Panc1 (cell line): ENCODE measurements at regions of chr1 and their contacts with region 1.

Region 1: DNA sequence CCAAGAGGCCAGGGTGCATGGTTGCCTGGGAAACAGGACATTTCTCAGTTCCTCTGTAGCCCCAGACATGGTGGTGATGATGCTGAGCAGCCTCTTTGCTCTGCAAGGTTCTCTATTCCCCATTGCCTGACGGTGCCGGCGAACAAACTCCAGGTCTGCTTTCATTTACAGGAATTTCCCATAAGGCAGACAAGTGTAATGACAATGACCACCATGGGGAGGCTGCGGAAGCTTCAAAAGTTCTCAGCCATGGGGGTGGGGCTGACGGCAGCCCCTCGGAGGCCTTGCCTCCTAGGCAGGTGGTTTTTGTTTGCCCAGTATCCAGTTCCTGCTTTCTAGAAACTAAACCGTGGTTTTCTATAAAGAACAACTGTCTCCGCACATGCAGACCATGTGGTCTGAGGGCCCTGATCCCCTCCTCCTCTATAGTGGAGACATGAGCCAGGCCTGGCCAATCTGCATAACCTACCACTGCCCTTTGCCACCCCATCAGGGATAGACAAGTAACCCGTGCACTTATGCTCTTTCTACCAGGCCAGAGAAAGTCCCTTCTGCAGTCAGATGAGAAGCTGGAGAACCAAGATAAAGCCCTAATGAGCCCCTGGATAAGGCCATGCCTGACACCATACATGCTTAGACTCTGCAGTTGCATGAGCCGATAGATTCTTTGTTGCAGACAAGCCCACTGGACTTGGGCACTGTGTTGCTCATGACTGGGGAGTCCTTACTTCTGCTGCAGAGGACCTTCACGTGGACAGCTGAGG is 54.1 kb downstream of the LDLRAD2 start:
- DNase-seq: no peak
- ATAC-seq: no peak
- H3K4me3 ChIP-seq: no peak overlapping the region
- H3K27ac ChIP-seq: no peak overlapping the region
- H3K4me1 ChIP-seq: peaks cover 14% of the 10 kb centered on the region
- H3K27me3 ChIP-seq: no peaks in the 10 kb centered on the region
- CTCF ChIP-seq: no peak

Region 2: DNA sequence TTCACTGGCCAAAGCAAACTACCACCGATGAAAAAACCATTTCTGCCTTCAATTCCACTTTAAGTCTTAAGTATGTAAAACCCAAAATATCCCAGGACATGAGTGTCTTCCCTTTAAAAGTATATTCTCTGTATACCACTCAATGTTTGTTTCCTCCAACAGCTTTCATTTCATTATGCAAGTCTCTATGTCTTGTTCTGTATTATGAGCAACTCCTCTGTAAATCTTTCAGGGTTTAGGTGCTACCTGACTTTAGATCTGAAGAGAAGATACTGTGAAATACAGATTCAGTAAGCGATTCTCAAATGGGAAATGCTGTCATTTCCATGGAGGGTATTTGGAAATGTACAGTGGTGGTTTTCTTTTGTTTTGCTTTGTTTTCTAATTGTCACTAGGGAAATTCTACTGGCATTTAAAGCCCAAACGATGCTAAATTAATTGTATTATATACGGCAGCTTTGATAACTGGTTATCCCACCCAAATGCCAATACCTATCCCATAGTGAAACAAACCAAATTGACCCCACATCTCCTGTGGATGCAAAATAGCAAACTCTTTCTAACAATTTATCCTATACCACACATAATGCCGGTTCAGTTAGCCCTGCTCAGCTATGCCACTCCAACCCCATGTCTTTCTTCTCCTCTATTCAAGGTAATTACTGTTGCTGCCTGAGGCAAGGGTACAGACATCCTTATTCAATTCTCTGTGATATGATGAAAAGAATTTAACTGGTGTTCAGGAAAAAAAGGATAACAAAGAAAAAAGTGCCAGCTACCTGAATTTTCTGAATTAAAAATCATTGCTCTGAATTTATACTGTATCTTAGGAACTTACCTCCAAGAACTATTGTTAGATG is 872.2 kb before region 1 on chr1:
- CTCF ChIA-PET with region 1: no interaction called
- POLR2A ChIA-PET with region 1: interaction called, 13 read pairs
- in situ Hi-C with region 1: no loop called
- intact Hi-C with region 1: no loop called
- DNase-seq: no peak
- ATAC-seq: no peak
- H3K4me3 ChIP-seq: no peak overlapping the region
- H3K27ac ChIP-seq: no peak overlapping the region
- H3K4me1 ChIP-seq: peaks cover 12% of the 10 kb centered on the region; the same call in 1 of the 2 replicates
- H3K27me3 ChIP-seq: no peaks in the 10 kb centered on the region
- CTCF ChIP-seq: no peak

Region 3: GRCh38 chr1:21876267-21876666 is 10.1 kb after region 1 on chr1:
- CTCF ChIA-PET with region 1: no interaction called
- POLR2A ChIA-PET with region 1: interaction called, 13 read pairs
- in situ Hi-C with region 1: no loop called
- intact Hi-C with region 1: no loop called
- DNase-seq: no peak
- ATAC-seq: no peak
- H3K4me3 ChIP-seq: no peak overlapping the region
- H3K27ac ChIP-seq: no peak overlapping the region
- H3K4me1 ChIP-seq: no peaks in the 10 kb centered on the region; the same call in 1 of the 2 replicates
- H3K27me3 ChIP-seq: no peaks in the 10 kb centered on the region
- CTCF ChIP-seq: no peak

Region 4: DNA sequence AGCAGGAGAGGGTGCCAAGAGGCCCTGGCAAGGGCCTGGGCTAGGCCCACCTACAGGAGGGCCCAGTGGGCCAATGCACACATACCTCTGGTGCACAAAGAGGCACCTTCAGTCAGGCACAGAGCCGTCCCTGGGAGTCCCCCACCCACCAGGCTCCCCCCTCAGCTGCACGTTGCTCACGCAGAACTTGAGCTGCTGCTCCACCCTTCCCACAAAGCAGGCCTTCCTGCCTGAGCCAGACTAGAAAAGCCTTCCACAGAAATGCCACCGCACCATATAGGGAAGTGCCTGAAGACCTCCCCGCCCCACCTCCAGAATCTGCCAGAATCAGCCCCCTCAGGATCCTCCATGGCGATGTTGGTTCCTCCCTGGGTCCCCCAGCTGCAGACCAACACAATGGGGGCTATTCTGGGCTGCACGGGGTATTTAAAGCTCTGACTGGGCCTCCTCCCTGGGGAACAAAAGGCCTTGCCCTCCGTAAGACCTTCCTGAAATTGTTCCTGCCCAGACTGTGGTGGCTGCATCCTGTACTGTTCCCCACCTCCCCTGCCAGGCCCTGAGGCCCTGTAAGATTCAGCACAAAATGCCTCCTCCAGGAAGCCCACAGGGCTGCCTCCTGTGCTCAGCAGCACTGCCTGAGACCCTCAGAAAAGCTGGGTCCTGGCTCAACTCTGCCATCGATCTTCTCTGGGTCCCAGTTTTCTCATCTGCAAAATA is 43.8 kb after region 1 on chr1:
- CTCF ChIA-PET with region 1: no interaction called
- POLR2A ChIA-PET with region 1: no interaction called
- in situ Hi-C with region 1: no loop called
- intact Hi-C with region 1: no loop called
- DNase-seq: no peak
- ATAC-seq: peak; percentile 32
- H3K4me3 ChIP-seq: no peak overlapping the region
- H3K27ac ChIP-seq: peak overlapping the region; percentile 81
- H3K4me1 ChIP-seq: peaks cover 56% of the 10 kb centered on the region
- H3K27me3 ChIP-seq: no peaks in the 10 kb centered on the region
- CTCF ChIP-seq: no peak